ENCODE measurements at regions of chr4 and their contacts with region 1.

Region 1: DNA sequence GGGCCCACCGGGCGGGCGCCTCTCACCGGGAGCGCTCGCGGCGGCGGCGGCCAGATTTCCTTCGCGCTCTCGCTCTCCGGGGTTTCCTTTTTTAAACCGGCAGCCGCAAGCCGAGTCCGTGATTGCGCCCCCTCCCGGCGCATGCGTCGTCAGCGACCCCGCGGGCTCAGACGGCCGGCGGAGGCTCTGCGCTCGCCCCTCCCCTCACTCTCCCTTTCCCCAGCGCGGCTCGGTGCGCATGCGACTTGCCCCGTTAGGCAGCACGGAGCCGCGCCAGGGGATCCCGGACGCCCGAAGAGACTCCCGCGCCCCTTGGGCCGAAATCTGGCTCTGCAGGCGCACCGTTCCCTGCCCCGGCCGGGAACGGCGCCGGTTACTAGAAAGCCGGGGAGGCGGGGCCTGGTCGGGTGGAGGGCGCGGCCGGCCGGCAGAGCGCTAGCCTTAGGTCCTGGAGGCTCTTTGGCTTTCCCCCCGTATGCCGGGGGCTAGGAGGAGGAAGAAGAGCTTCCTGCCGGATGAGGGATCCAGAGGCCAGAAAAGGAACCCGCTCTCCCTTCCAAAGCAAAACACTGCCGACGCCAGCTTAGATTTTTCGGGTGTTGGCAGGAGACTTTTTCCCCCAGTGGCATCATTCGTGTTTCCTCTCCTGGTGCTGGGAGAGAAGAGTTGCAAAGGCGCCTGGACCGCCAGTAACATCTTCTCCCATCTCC is at the start of gene CLOCK:
- DNase-seq: peak; percentile 85
- H3K4me3 Mint-ChIP-seq: peak within 1 kb of the TSS; percentile 87
- H3K27ac Mint-ChIP-seq: peak within 1 kb of the TSS; percentile 49
- H3K4me1 Mint-ChIP-seq: peaks cover 53% of the 10 kb centered on the region
- H3K27me3 Mint-ChIP-seq: no peaks in the 10 kb centered on the region
- CTCF ChIP-seq: peak; percentile 29
- total RNA-seq, gene CLOCK: 37.6 and 44.0 TPM in 2 replicates

Region 2: DNA sequence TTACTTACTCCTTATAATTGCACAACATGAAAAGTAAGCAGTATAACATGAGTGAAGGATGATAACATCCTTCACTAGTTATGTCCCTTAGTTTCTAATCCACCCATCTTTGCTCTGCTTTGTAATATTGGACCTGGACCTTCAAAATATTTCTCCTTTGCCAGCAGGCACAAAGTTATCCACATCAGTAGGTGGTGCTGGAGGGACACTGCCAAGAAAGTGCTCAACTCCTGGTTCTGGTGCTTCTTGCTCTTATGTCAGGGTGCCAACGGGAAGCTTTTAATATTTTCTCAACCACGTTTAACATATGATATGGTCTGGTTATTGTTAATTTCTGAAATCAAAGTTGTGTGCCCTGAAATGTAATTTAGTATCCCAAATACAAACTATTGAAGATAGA is 102.1 kb before region 1 on chr4:
- CTCF ChIA-PET with region 1: interaction called, 5 read pairs
- POLR2A ChIA-PET with region 1: interaction called, 6 read pairs
- intact Hi-C with region 1: loop called (anchors 2 kb)
- DNase-seq: peak; percentile 43
- H3K4me3 Mint-ChIP-seq: no peak overlapping the region
- H3K27ac Mint-ChIP-seq: no peak overlapping the region
- H3K4me1 Mint-ChIP-seq: peaks cover 6% of the 10 kb centered on the region
- H3K27me3 Mint-ChIP-seq: no peaks in the 10 kb centered on the region
- CTCF ChIP-seq: peak; percentile 55

Region 3: GRCh38 chr4:55524844-55525571 is 21.9 kb before region 1 on chr4:
- CTCF ChIA-PET with region 1: interaction called, 4 read pairs
- POLR2A ChIA-PET with region 1: interaction called, 13 read pairs
- intact Hi-C with region 1: no loop called
- DNase-seq: peak; percentile 20
- H3K4me3 Mint-ChIP-seq: no peak overlapping the region
- H3K27ac Mint-ChIP-seq: peak overlapping the region; percentile 39
- H3K4me1 Mint-ChIP-seq: peaks cover 7% of the 10 kb centered on the region
- H3K27me3 Mint-ChIP-seq: no peaks in the 10 kb centered on the region
- CTCF ChIP-seq: no peak

Region 4: DNA sequence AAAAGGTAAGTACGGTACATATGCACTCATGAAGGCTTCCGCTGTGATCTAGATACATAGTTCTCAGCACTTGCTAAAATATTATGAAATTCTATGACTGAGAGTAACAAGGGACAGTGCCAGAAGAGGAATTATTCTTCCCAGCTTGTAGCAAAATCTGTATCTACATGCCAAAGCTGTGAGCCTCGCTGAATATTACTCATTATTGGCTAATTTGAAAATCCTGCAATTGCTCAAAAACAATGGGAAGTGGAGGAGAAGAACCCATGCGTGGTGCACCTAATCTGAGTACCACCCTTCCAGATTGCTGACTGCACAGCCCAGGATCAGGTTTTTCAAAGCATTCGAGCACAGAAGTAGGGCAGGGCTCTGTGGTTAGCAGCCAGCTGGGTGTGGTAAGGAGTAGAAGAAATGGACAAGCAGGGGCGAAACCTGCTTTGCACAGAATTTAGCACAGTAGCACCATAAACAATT is 62.5 kb after region 1 on chr4:
- CTCF ChIA-PET with region 1: interaction called, 7 read pairs
- POLR2A ChIA-PET with region 1: interaction called, 55 read pairs
- intact Hi-C with region 1: no loop called
- DNase-seq: peak; percentile 94
- H3K4me3 Mint-ChIP-seq: peak overlapping the region; percentile 70
- H3K27ac Mint-ChIP-seq: peak overlapping the region; percentile 97
- H3K4me1 Mint-ChIP-seq: peaks cover 25% of the 10 kb centered on the region
- H3K27me3 Mint-ChIP-seq: no peaks in the 10 kb centered on the region
- CTCF ChIP-seq: no peak

Region 5: GRCh38 chr4:55736605-55737183 is 189.8 kb after region 1 on chr4:
- CTCF ChIA-PET with region 1: interaction called, 8 read pairs
- POLR2A ChIA-PET with region 1: interaction called, 21 read pairs
- intact Hi-C with region 1: loop called (anchors 2 kb)
- DNase-seq: peak; percentile 27
- H3K4me3 Mint-ChIP-seq: no peak overlapping the region
- H3K27ac Mint-ChIP-seq: no peak overlapping the region
- H3K4me1 Mint-ChIP-seq: peaks cover 11% of the 10 kb centered on the region
- H3K27me3 Mint-ChIP-seq: no peaks in the 10 kb centered on the region
- CTCF ChIP-seq: peak; percentile 47